Right ventricle myocardium inferior (tissue), 1 donor: ENCODE measurements at regions of chr17 and their contacts with region 1.

Region 1: GRCh38 chr17:31738996-31739699 is 119.9 kb downstream of the COPRS start:
- DNase-seq: no peak
- ATAC-seq: peak; percentile 76

Region 2: DNA sequence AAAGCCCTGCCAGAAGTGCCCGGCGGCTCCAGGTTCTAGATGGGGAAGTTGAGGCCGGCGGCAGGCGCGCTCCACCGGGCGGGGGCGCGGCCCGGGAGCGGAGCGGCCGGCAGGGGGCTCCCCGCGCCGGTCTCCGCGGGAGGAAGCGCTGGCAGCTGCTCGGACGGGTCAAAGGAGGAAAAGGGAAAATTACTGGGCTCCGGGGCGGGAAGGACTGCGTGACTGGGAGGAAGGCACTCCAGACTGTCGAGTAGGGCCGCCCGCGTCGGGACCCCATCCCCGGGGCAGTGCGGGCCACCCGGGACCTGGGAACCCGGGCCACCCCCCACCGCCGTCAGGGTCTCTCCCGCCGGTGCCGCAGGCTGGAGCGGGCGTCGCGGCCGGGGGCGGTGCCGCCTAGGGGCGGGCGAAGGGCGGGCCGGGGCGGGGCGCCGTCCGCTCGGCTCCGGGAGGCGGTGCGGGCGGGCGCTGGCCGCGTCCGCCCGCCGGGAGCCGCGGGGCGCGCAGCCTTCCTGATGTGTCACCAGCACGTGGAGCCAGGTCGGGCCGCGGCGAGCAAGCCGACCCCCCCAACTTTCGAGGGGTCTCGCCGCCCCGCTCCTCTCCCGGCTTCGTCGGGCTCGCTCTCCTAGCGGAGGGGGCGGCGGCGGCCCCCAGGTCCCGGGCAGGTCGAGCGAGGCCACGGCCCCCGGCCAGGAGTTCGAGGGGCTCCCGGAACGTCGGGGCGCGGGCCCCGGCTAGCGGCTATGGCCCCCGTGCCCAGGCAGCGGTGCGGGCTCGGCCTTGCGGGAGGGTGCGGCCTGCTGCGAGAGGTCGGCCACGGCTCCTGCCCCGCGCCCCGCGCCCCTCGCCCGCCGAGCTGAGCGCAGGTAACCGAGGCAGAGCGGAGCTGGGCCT is 180.2 kb before region 1 on chr17:
- intact Hi-C with region 1: loop called (anchors 2 kb)
- DNase-seq: peak; percentile 90
- ATAC-seq: peak; percentile 90